H1 (cell line): ENCODE measurements at regions of chr7 and their contacts with region 1.

Region 1: GRCh38 chr7:83475420-83475819 is 173.5 kb downstream of the SEMA3E start:
- DNase-seq: no peak
- H3K4me3 ChIP-seq: no peak overlapping the region
- H3K27ac ChIP-seq: no peak overlapping the region
- H3K4me1 ChIP-seq: no peaks in the 10 kb centered on the region; a peak in 1 of 7 replicates
- H3K27me3 ChIP-seq: no peaks in the 10 kb centered on the region; a peak in 1 of 7 replicates
- CTCF ChIP-seq: peak; percentile 69 to 87 (median 76)
- EP300 ChIP-seq: no peak
- POLR2A ChIP-seq: peak in 1 of 2 experiments; percentile 52; a peak in 1 of 3 replicates
- RAD21 ChIP-seq: peak; percentile 71 to 77

Region 2: GRCh38 chr7:83427929-83428328 is 47.5 kb before region 1 on chr7:
- CTCF ChIA-PET with region 1: interaction called, 10 read pairs
- POLR2A ChIA-PET with region 1: interaction called, 6 read pairs
- DNase-seq: no peak
- H3K4me3 ChIP-seq: peak overlapping the region in 1 of 4 experiments; percentile 22; a peak in 1 of 8 replicates
- H3K27ac ChIP-seq: no peak overlapping the region
- H3K4me1 ChIP-seq: peaks cover 0 to 17% (median 5%) of the 10 kb centered on the region in 4 experiments; a peak in 5 of 7 replicates
- H3K27me3 ChIP-seq: no peaks in the 10 kb centered on the region
- CTCF ChIP-seq: no peak
- EP300 ChIP-seq: no peak
- POLR2A ChIP-seq: no peak
- RAD21 ChIP-seq: no peak

Region 3: GRCh38 chr7:83457022-83457892 is 18.2 kb before region 1 on chr7:
- CTCF ChIA-PET with region 1: interaction called, 3 read pairs
- POLR2A ChIA-PET with region 1: interaction called, 10 read pairs
- DNase-seq: no peak
- H3K4me3 ChIP-seq: peak overlapping the region in 2 of 4 experiments; percentile 4 to 21; a peak in 2 of 8 replicates
- H3K27ac ChIP-seq: no peak overlapping the region
- H3K4me1 ChIP-seq: peaks cover 0 to 22% (median 10%) of the 10 kb centered on the region in 4 experiments; a peak in 5 of 7 replicates
- H3K27me3 ChIP-seq: no peaks in the 10 kb centered on the region
- CTCF ChIP-seq: no peak
- EP300 ChIP-seq: no peak
- POLR2A ChIP-seq: no peak
- RAD21 ChIP-seq: no peak

Region 4: GRCh38 chr7:83486957-83487356 is 11.5 kb after region 1 on chr7:
- CTCF ChIA-PET with region 1: interaction called, 28 read pairs
- POLR2A ChIA-PET with region 1: interaction called, 47 read pairs
- DNase-seq: no peak
- H3K4me3 ChIP-seq: no peak overlapping the region
- H3K27ac ChIP-seq: no peak overlapping the region
- H3K4me1 ChIP-seq: no peaks in the 10 kb centered on the region
- H3K27me3 ChIP-seq: no peaks in the 10 kb centered on the region
- CTCF ChIP-seq: no peak
- EP300 ChIP-seq: no peak
- POLR2A ChIP-seq: no peak
- RAD21 ChIP-seq: no peak

Region 5: GRCh38 chr7:83701736-83702135 is 226.3 kb after region 1 on chr7:
- CTCF ChIA-PET with region 1: no interaction called
- POLR2A ChIA-PET with region 1: no interaction called
- DNase-seq: no peak
- H3K4me3 ChIP-seq: no peak overlapping the region
- H3K27ac ChIP-seq: no peak overlapping the region
- H3K4me1 ChIP-seq: peaks cover 0 to 2% (median 0%) of the 10 kb centered on the region in 4 experiments; a peak in 1 of 7 replicates
- H3K27me3 ChIP-seq: peaks cover 7 to 19% (median 9%) of the 10 kb centered on the region in 4 experiments; a peak in 6 of 7 replicates
- CTCF ChIP-seq: no peak
- EP300 ChIP-seq: no peak
- POLR2A ChIP-seq: no peak
- RAD21 ChIP-seq: no peak